ENCODE measurements at regions of chr17 and their contacts with region 1.

Region 1: GRCh38 chr17:57987580-57988421 is at the start of gene VEZF1:
- DNase-seq: peak; percentile 66 to 85 (median 75)
- ATAC-seq: peak; percentile 84
- H3K4me3 ChIP-seq: peak within 1 kb of the TSS; percentile 94
- H3K4me3 Mint-ChIP-seq: peak within 1 kb of the TSS; percentile 92 to 96 (median 95)
- H3K27ac ChIP-seq: peak within 1 kb of the TSS; percentile 87
- H3K27ac Mint-ChIP-seq: peak within 1 kb of the TSS; percentile 90 to 98 (median 95)
- H3K4me1 ChIP-seq: peaks cover 39 to 45% of the 10 kb centered on the region in 2 donors
- H3K4me1 Mint-ChIP-seq: peaks cover 45 to 81% (median 75%) of the 10 kb centered on the region in 7 donors
- H3K27me3 ChIP-seq: no peaks in the 10 kb centered on the region
- H3K27me3 Mint-ChIP-seq: no peaks in the 10 kb centered on the region
- total RNA-seq, gene VEZF1: 43.2 to 81.9 (median 46.3) TPM

Region 2: GRCh38 chr17:57927048-57927723 is 60.6 kb before region 1 on chr17:
- CTCF ChIA-PET with region 1: no interaction called
- POLR2A ChIA-PET with region 1: no interaction called
- intact Hi-C with region 1: no loop called
- DNase-seq: no peak
- ATAC-seq: no peak
- H3K4me3 ChIP-seq: no peak overlapping the region
- H3K4me3 Mint-ChIP-seq: no peak overlapping the region
- H3K27ac ChIP-seq: no peak overlapping the region
- H3K27ac Mint-ChIP-seq: peak overlapping the region in 1 of 9 donors; percentile 12
- H3K4me1 ChIP-seq: no peaks in the 10 kb centered on the region
- H3K4me1 Mint-ChIP-seq: peaks cover 0 to 5% (median 0%) of the 10 kb centered on the region in 7 donors
- H3K27me3 ChIP-seq: no peaks in the 10 kb centered on the region
- H3K27me3 Mint-ChIP-seq: peaks cover 0 to 46% (median 4%) of the 10 kb centered on the region in 5 donors

Region 3: GRCh38 chr17:57946798-57947358 is 40.9 kb before region 1 on chr17:
- CTCF ChIA-PET with region 1: no interaction called
- POLR2A ChIA-PET with region 1: interaction called, 9 read pairs
- intact Hi-C with region 1: loop called (anchors 5 kb)
- DNase-seq: peak in 7 of 9 donors; percentile 14 to 36 (median 24)
- ATAC-seq: peak; percentile 82
- H3K4me3 ChIP-seq: peak overlapping the region; percentile 56
- H3K4me3 Mint-ChIP-seq: peak overlapping the region; percentile 74 to 99 (median 94)
- H3K27ac ChIP-seq: peak overlapping the region; percentile 15
- H3K27ac Mint-ChIP-seq: peak overlapping the region; percentile 2 to 94 (median 77)
- H3K4me1 ChIP-seq: peaks cover 6 to 9% of the 10 kb centered on the region in 2 donors
- H3K4me1 Mint-ChIP-seq: peaks cover 25 to 42% (median 33%) of the 10 kb centered on the region in 7 donors
- H3K27me3 ChIP-seq: no peaks in the 10 kb centered on the region
- H3K27me3 Mint-ChIP-seq: peaks cover 0 to 41% (median 0%) of the 10 kb centered on the region in 5 donors

Region 4: DNA sequence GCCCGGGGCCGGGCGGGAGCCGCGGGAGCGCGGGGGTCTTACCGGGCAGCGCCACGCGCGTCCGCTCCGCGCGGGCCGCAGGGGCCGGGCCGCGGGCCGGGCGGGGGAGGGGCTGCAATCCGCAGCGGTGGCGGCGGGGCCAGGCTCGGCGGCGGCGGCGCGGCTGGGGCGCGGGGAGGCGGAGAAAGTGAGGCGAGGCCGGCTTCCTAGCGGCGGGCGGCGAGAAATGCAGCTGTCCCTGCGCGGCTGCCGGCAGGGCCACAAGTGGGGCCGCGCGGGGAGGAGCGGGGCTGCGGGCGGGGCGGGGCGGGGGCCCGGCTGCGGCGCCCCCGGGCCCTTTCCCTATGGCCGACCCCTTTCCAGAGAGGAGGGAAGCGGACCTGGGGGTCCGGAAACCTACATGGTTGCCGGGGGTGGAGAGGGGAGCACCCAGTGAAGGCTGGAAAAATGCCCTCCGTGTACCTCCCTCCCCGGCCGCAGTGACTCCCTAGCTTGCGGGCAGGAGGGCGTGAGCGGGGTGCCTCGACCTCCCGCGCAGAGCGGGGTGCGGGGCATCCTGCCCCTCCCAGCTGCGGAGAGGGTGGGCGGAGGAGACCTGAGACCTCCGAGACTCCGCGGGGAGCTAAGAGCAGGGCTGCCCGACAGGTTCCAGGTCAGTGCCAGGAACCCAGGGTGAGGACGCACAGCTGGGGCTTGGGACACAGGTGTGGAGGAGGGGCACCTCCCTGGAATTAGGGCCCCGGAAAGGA is 32.4 kb before region 1 on chr17 and contains the start of gene CUEDC1:
- CTCF ChIA-PET with region 1: interaction called, 3 read pairs
- POLR2A ChIA-PET with region 1: interaction called, 4 read pairs
- intact Hi-C with region 1: loop called in 1 of 2 experiments (anchors 2 kb)
- DNase-seq: peak; percentile 21 to 76 (median 51)
- ATAC-seq: peak; percentile 92
- H3K4me3 ChIP-seq: peak within 1 kb of the TSS; percentile 54
- H3K4me3 Mint-ChIP-seq: peak within 1 kb of the TSS; percentile 74 to 87 (median 81)
- H3K27ac ChIP-seq: no peak within 1 kb of the TSS
- H3K27ac Mint-ChIP-seq: peak within 1 kb of the TSS in 4 of 9 donors; percentile 24 to 67 (median 55)
- H3K4me1 ChIP-seq: peaks cover 14% of the 10 kb centered on the region in 2 donors
- H3K4me1 Mint-ChIP-seq: peaks cover 6 to 36% (median 30%) of the 10 kb centered on the region in 7 donors
- H3K27me3 ChIP-seq: no peaks in the 10 kb centered on the region
- H3K27me3 Mint-ChIP-seq: peaks cover 4 to 63% (median 9%) of the 10 kb centered on the region in 5 donors
- total RNA-seq, gene CUEDC1: 0.10 to 7.7 (median 1.0) TPM

Region 5: DNA sequence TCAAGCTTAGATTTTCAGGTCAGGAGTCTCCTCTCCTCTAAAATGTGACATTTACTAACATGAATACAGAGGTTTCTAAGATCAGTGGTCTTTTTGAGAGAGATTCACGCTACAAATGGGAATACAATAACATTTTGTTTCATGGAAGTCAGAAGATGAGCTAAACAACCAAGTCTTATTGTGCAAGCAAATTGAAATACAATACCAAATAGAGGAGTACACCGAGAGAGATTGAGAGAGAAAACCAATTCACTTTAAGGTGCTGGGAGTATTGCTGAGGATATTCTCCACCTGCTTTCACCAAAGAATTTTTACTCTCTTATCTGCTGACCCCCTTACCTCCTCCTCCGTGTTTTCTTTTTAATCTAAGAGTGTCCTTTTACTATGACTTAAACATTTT is 11.2 kb before region 1 on chr17:
- CTCF ChIA-PET with region 1: interaction called, 3 read pairs
- POLR2A ChIA-PET with region 1: interaction called, 8 read pairs
- intact Hi-C with region 1: loop called in 1 of 2 experiments (anchors 1 kb)
- DNase-seq: no peak
- ATAC-seq: no peak
- H3K4me3 ChIP-seq: no peak overlapping the region
- H3K4me3 Mint-ChIP-seq: no peak overlapping the region
- H3K27ac ChIP-seq: no peak overlapping the region
- H3K27ac Mint-ChIP-seq: peak overlapping the region in 2 of 9 donors; percentile 22
- H3K4me1 ChIP-seq: peaks cover 2 to 3% of the 10 kb centered on the region in 2 donors
- H3K4me1 Mint-ChIP-seq: peaks cover 9 to 30% (median 20%) of the 10 kb centered on the region in 7 donors
- H3K27me3 ChIP-seq: no peaks in the 10 kb centered on the region
- H3K27me3 Mint-ChIP-seq: no peaks in the 10 kb centered on the region

Region 6: GRCh38 chr17:58046239-58047094 is 58.7 kb after region 1 on chr17:
- CTCF ChIA-PET with region 1: no interaction called
- POLR2A ChIA-PET with region 1: no interaction called
- intact Hi-C with region 1: no loop called
- DNase-seq: no peak
- ATAC-seq: no peak
- H3K4me3 ChIP-seq: no peak overlapping the region
- H3K4me3 Mint-ChIP-seq: no peak overlapping the region
- H3K27ac ChIP-seq: no peak overlapping the region
- H3K27ac Mint-ChIP-seq: no peak overlapping the region
- H3K4me1 ChIP-seq: no peaks in the 10 kb centered on the region
- H3K4me1 Mint-ChIP-seq: peaks cover 0 to 2% (median 0%) of the 10 kb centered on the region in 7 donors
- H3K27me3 ChIP-seq: peaks cover 0 to 2% of the 10 kb centered on the region in 2 donors
- H3K27me3 Mint-ChIP-seq: peaks cover 8 to 36% (median 25%) of the 10 kb centered on the region in 5 donors